Activated naive CD4-positive, alpha-beta T cell treated with anti-CD3 and anti-CD28 coated beads for 36 hours (primary cell): ENCODE measurements at regions of chr3 and their contacts with region 1.

Region 1: DNA sequence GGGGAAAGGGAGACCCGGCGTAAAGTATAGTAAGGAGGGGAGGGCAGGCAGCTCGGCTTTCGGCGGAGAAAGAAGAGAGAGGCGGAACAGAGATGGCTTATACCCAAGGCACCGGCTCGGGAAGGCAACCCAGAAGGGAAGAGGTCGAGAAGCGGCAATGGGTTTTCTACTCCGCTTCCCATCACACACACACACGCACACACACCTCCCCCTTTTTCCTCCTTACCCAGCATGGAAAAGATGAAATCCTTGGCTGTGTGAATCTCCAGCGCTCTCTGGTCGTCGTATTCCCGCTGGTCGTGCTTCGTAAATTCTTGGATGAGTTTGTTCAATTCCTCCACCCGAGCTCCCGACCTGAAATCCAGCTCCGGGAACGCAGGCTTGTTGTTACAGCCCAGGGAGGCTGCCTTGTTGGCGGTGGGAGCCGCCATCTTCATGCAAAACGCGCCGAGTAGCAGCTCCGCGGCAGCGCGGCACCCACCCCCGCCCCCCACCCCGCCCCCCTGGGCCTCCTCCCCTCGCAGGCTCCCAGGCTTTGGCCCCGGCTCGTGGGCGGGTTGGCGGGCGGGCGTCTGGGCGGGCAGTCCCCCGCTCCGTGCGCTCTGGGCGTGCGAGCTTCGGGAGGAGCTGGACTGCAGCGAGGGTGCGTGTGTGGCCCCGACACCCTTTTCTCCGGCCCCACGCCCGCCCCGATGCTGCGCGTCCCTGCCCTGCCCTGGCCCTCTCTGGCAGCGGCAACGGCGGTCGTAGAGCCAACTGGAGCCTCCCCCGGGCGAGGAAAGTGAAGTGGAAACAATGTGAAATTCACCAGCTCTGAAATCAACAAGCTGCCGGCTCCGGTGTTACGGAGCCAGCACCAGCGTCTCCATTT is at the start of gene MB21D2:
- DNase-seq: peak; percentile 52
- H3K4me3 Mint-ChIP-seq: peak within 1 kb of the TSS; percentile 94
- H3K27ac Mint-ChIP-seq: peak within 1 kb of the TSS; percentile 87
- H3K4me1 Mint-ChIP-seq: peaks cover 21% of the 10 kb centered on the region
- H3K27me3 Mint-ChIP-seq: peaks cover 45% of the 10 kb centered on the region
- total RNA-seq, gene MB21D2: 6.4 to 6.5 TPM

Region 2: GRCh38 chr3:192444096-192444790 is 473.4 kb before region 1 on chr3:
- CTCF ChIA-PET with region 1: no interaction called
- intact Hi-C with region 1: no loop called
- DNase-seq: peak; percentile 69
- H3K4me3 Mint-ChIP-seq: no peak overlapping the region
- H3K27ac Mint-ChIP-seq: no peak overlapping the region
- H3K4me1 Mint-ChIP-seq: no peaks in the 10 kb centered on the region
- H3K27me3 Mint-ChIP-seq: peaks cover 34% of the 10 kb centered on the region

Region 3: GRCh38 chr3:192831111-192831644 is 86.5 kb before region 1 on chr3:
- CTCF ChIA-PET with region 1: no interaction called
- intact Hi-C with region 1: loop called (anchors 1 kb)
- DNase-seq: no peak
- H3K4me3 Mint-ChIP-seq: no peak overlapping the region
- H3K27ac Mint-ChIP-seq: no peak overlapping the region
- H3K4me1 Mint-ChIP-seq: peaks cover 26% of the 10 kb centered on the region
- H3K27me3 Mint-ChIP-seq: no peaks in the 10 kb centered on the region

Region 4: DNA sequence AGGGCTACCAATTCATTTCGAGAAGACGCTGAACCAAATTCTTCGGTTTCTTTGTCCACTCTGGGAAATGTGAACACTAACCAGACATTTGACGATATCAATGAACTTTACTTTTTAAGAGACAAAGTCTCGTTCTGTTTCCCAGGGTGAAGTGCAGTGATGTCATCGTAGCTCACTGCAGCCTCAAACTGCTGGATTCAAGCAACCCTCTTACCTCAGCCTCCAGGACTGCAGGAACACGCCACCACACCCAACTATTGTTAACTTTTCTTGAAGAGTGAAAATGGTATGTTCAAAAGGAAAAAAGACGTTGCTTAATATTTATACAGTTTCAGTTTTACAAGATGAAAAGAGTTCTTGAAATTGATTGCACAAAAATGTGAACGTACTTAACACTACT is 30.6 kb before region 1 on chr3:
- CTCF ChIA-PET with region 1: interaction called, 10 read pairs
- intact Hi-C with region 1: loop called (anchors 1 kb)
- DNase-seq: peak; percentile 36
- H3K4me3 Mint-ChIP-seq: no peak overlapping the region
- H3K27ac Mint-ChIP-seq: peak overlapping the region; percentile 82
- H3K4me1 Mint-ChIP-seq: peaks cover 59% of the 10 kb centered on the region
- H3K27me3 Mint-ChIP-seq: peaks cover 7% of the 10 kb centered on the region

Region 5: GRCh38 chr3:192899540-192899982 is 18.1 kb before region 1 on chr3:
- CTCF ChIA-PET with region 1: no interaction called
- intact Hi-C with region 1: loop called (anchors 1 kb)
- DNase-seq: no peak
- H3K4me3 Mint-ChIP-seq: peak overlapping the region; percentile 22
- H3K27ac Mint-ChIP-seq: peak overlapping the region; percentile 82
- H3K4me1 Mint-ChIP-seq: peaks cover 47% of the 10 kb centered on the region
- H3K27me3 Mint-ChIP-seq: peaks cover 14% of the 10 kb centered on the region

Region 6: DNA sequence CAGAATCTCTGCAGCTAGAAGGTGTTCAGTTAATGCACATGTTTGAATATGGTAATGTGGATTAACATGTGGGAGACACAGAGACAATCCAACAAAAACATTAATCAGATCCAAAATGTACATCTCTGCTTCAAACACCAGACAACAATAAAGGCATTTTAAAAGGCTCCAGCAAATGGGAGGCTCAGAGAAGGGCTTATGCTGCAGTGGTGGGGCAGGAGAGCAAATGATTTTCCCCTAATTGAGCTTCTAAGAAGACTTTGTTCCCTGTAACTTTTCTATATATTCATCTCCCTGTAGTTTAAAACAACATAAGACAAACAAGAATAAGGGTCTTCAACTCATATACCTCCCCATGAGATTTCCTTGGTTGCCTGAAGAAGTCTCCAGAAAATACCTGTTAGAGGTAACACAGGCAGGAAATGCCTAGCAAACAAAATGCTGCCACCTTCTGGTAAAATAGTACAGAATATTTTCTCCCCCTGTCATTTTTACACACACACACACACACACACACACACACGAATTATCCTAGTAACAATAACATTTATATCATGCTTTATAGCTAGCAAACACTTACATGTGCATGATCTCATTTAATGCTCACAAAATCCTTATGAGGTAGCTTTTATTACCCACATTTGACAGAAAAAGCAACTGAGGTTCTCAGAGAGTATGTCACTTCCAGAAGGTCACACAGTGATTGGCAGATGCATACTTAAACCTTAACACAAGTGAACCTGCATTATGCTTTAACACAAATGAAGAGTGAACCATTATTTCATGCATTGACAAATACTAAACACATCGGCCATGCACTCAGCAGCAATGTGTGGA is 123.4 kb after region 1 on chr3:
- CTCF ChIA-PET with region 1: interaction called, 6 read pairs
- intact Hi-C with region 1: loop called (anchors 2 kb)
- DNase-seq: peak; percentile 9
- H3K4me3 Mint-ChIP-seq: no peak overlapping the region
- H3K27ac Mint-ChIP-seq: no peak overlapping the region
- H3K4me1 Mint-ChIP-seq: no peaks in the 10 kb centered on the region
- H3K27me3 Mint-ChIP-seq: no peaks in the 10 kb centered on the region

Region 7: DNA sequence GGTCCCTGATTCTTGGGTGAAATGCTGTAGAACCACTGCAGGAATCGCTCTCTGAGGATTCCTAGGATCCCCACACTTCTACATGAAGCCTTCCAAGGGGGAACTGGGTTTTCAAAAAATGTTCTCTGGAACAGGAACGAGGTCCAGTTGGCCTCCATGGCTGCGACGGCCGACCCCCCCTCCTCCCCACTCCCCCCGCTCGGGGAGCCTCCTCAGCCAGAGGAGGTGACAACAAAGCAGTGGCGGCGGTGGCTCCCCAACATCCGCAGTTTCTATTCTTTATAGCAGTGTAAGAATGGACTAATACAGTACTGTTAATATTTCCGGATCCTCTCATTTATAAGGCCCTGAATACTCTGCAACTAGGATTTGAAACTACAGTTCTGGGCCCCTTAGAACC is 239.4 kb after region 1 on chr3:
- CTCF ChIA-PET with region 1: no interaction called
- intact Hi-C with region 1: no loop called
- DNase-seq: no peak
- H3K4me3 Mint-ChIP-seq: no peak overlapping the region
- H3K27ac Mint-ChIP-seq: no peak overlapping the region
- H3K4me1 Mint-ChIP-seq: no peaks in the 10 kb centered on the region
- H3K27me3 Mint-ChIP-seq: peaks cover 3% of the 10 kb centered on the region

Region 8: GRCh38 chr3:193743702-193744047 is 826.0 kb after region 1 on chr3:
- CTCF ChIA-PET with region 1: no interaction called
- intact Hi-C with region 1: no loop called
- DNase-seq: peak; percentile 57
- H3K4me3 Mint-ChIP-seq: no peak overlapping the region
- H3K27ac Mint-ChIP-seq: no peak overlapping the region
- H3K4me1 Mint-ChIP-seq: peaks cover 9% of the 10 kb centered on the region
- H3K27me3 Mint-ChIP-seq: no peaks in the 10 kb centered on the region